Naive thymus-derived CD4-positive, alpha-beta T cell (primary cell): ENCODE measurements at regions of chr15 and their contacts with region 1.

Region 1: DNA sequence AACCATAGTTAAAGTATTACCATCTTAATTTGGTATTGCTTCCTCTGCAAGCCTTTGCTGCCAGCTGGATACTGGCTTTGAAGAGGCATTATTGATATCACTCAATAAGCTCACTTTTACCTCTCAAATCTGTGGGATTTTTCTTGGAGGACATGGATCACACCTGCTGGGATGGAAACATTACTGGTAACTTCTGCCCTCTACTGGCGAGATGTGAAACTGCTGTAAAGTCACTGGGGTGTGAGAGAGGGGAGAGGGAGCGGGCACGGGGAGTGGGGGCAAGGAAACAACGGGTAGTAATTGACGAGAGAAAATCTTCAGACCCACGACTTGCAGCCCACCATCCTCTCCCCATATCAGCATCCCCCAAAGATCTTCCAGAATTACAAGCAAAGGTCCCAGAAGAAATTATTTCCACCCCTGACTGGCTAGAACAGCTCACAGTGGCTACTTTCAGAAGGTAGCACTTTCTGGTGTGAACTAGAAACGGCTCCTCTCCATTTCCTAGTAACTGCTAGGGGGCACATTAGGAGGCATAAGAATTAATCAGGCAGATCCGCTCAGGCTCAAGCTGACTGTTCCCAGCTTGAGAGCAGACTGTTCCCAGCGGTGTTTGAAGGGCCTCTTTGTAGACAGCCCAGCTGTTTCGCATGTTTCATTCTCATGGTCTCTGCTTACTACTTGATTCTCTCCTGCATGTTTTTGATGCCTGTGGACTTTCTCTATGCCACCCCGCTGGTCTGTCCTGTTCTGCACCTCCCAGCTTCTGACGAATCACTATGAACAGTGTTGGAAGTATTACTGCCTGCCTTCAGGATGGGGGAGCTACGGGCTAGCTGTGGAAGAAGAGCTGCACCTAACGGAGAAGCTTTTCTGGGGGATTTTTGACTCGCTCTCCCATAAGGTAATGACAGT is 230.4 kb upstream of the CHRM5 start:
- DNase-seq: peak in 6 of 9 donors; percentile 6 to 23 (median 7)
- ATAC-seq: no peak
- H3K4me3 ChIP-seq: no peak overlapping the region
- H3K4me3 Mint-ChIP-seq: peak overlapping the region in 1 of 10 donors; percentile 21
- H3K27ac ChIP-seq: no peak overlapping the region
- H3K27ac Mint-ChIP-seq: no peak overlapping the region
- H3K4me1 ChIP-seq: no peaks in the 10 kb centered on the region
- H3K4me1 Mint-ChIP-seq: peaks cover 0 to 4% (median 3%) of the 10 kb centered on the region in 7 donors
- H3K27me3 ChIP-seq: no peaks in the 10 kb centered on the region
- H3K27me3 Mint-ChIP-seq: peaks cover 0 to 5% (median 0%) of the 10 kb centered on the region in 5 donors

Region 2: GRCh38 chr15:33963831-33964664 is 226.1 kb after region 1 on chr15:
- CTCF ChIA-PET with region 1: no interaction called
- POLR2A ChIA-PET with region 1: no interaction called
- intact Hi-C with region 1: loop called in 1 of 2 experiments (anchors 1 kb)
- DNase-seq: no peak
- ATAC-seq: no peak
- H3K4me3 ChIP-seq: no peak overlapping the region
- H3K4me3 Mint-ChIP-seq: no peak overlapping the region
- H3K27ac ChIP-seq: no peak overlapping the region
- H3K27ac Mint-ChIP-seq: no peak overlapping the region
- H3K4me1 ChIP-seq: no peaks in the 10 kb centered on the region
- H3K4me1 Mint-ChIP-seq: peaks cover 0 to 5% (median 0%) of the 10 kb centered on the region in 7 donors
- H3K27me3 ChIP-seq: no peaks in the 10 kb centered on the region
- H3K27me3 Mint-ChIP-seq: peaks cover 0 to 8% (median 0%) of the 10 kb centered on the region in 5 donors